PC-9 (cell line): ENCODE measurements at regions of chr2 and their contacts with region 1.

Region 1: GRCh38 chr2:234368861-234369261 is 128.0 kb downstream of the ARL4C start:
- DNase-seq: peak; percentile 61 to 82
- H3K4me3 ChIP-seq: no peak overlapping the region
- H3K27ac ChIP-seq: peak overlapping the region; percentile 78
- H3K4me1 ChIP-seq: peaks cover 96% of the 10 kb centered on the region
- H3K27me3 ChIP-seq: no peaks in the 10 kb centered on the region
- CTCF ChIP-seq: 0 out of 2 replicates have a peak, but pooled peaks have one; percentile 14

Region 2: GRCh38 chr2:234411793-234412192 is 42.9 kb after region 1 on chr2:
- CTCF ChIA-PET with region 1: no interaction called
- POLR2A ChIA-PET with region 1: interaction called, 16 read pairs
- intact Hi-C with region 1: no loop called
- DNase-seq: no peak
- H3K4me3 ChIP-seq: no peak overlapping the region
- H3K27ac ChIP-seq: no peak overlapping the region
- H3K4me1 ChIP-seq: no peaks in the 10 kb centered on the region
- H3K27me3 ChIP-seq: no peaks in the 10 kb centered on the region
- CTCF ChIP-seq: no peak